Activated B cell treated with CpG ODN at 0.5 μM for 24 hours (primary cell): ENCODE measurements at regions of chr6 and their contacts with region 1.

Region 1: GRCh38 chr6:80004173-80005072 is at the start of gene TTK:
- DNase-seq: peak; percentile 82
- ATAC-seq: peak; percentile 100
- H3K4me3 Mint-ChIP-seq: peak within 1 kb of the TSS; percentile 93
- H3K27ac Mint-ChIP-seq: peak within 1 kb of the TSS; percentile 86
- H3K4me1 Mint-ChIP-seq: peaks cover 20% of the 10 kb centered on the region
- H3K27me3 Mint-ChIP-seq: no peaks in the 10 kb centered on the region
- CTCF ChIP-seq: no peak
- total RNA-seq, gene TTK: 1.9 and 2.3 TPM in 2 replicates

Region 2: GRCh38 chr6:78867370-78868040 is 1136.9 kb before region 1 on chr6 and contains the start of gene IRAK1BP1:
- CTCF ChIA-PET with region 1: no interaction called
- POLR2A ChIA-PET with region 1: no interaction called
- intact Hi-C with region 1: loop called (anchors 5 kb)
- DNase-seq: peak; percentile 75
- ATAC-seq: peak; percentile 96
- H3K4me3 Mint-ChIP-seq: peak within 1 kb of the TSS; percentile 99
- H3K27ac Mint-ChIP-seq: peak within 1 kb of the TSS; percentile 98
- H3K4me1 Mint-ChIP-seq: peaks cover 20% of the 10 kb centered on the region
- H3K27me3 Mint-ChIP-seq: no peaks in the 10 kb centered on the region
- CTCF ChIP-seq: no peak
- total RNA-seq, gene IRAK1BP1: 2.4 and 3.0 TPM in 2 replicates

Region 3: GRCh38 chr6:79233611-79234149 is 770.7 kb before region 1 on chr6:
- CTCF ChIA-PET with region 1: no interaction called
- POLR2A ChIA-PET with region 1: no interaction called
- intact Hi-C with region 1: loop called (anchors 1 kb)
- DNase-seq: peak; percentile 63
- ATAC-seq: peak; percentile 57
- H3K4me3 Mint-ChIP-seq: peak overlapping the region; percentile 96
- H3K27ac Mint-ChIP-seq: peak overlapping the region; percentile 89
- H3K4me1 Mint-ChIP-seq: peaks cover 14% of the 10 kb centered on the region
- H3K27me3 Mint-ChIP-seq: no peaks in the 10 kb centered on the region
- CTCF ChIP-seq: no peak

Region 4: GRCh38 chr6:79869600-79870084 is 134.8 kb before region 1 on chr6:
- CTCF ChIA-PET with region 1: no interaction called
- POLR2A ChIA-PET with region 1: interaction called, 3 read pairs
- intact Hi-C with region 1: loop called (anchors 2 kb)
- DNase-seq: peak; percentile 65
- ATAC-seq: peak; percentile 100
- H3K4me3 Mint-ChIP-seq: peak overlapping the region; percentile 65
- H3K27ac Mint-ChIP-seq: no peak overlapping the region
- H3K4me1 Mint-ChIP-seq: peaks cover 10% of the 10 kb centered on the region
- H3K27me3 Mint-ChIP-seq: peaks cover 4% of the 10 kb centered on the region
- CTCF ChIP-seq: peak; percentile 71

Region 5: GRCh38 chr6:80106418-80107235 is 102.2 kb after region 1 on chr6 and contains the start of gene BCKDHB:
- CTCF ChIA-PET with region 1: no interaction called
- POLR2A ChIA-PET with region 1: interaction called, 10 read pairs
- intact Hi-C with region 1: loop called (anchors 1 kb)
- DNase-seq: peak; percentile 89
- ATAC-seq: peak; percentile 98
- H3K4me3 Mint-ChIP-seq: peak within 1 kb of the TSS; percentile 91
- H3K27ac Mint-ChIP-seq: peak within 1 kb of the TSS; percentile 85
- H3K4me1 Mint-ChIP-seq: peaks cover 18% of the 10 kb centered on the region
- H3K27me3 Mint-ChIP-seq: peaks cover 7% of the 10 kb centered on the region
- CTCF ChIP-seq: no peak
- total RNA-seq, gene BCKDHB: 16.6 and 17.0 TPM in 2 replicates